Pancreas (tissue), 10 donors: ENCODE measurements at regions of chr4 and their contacts with region 1.

Region 1: DNA sequence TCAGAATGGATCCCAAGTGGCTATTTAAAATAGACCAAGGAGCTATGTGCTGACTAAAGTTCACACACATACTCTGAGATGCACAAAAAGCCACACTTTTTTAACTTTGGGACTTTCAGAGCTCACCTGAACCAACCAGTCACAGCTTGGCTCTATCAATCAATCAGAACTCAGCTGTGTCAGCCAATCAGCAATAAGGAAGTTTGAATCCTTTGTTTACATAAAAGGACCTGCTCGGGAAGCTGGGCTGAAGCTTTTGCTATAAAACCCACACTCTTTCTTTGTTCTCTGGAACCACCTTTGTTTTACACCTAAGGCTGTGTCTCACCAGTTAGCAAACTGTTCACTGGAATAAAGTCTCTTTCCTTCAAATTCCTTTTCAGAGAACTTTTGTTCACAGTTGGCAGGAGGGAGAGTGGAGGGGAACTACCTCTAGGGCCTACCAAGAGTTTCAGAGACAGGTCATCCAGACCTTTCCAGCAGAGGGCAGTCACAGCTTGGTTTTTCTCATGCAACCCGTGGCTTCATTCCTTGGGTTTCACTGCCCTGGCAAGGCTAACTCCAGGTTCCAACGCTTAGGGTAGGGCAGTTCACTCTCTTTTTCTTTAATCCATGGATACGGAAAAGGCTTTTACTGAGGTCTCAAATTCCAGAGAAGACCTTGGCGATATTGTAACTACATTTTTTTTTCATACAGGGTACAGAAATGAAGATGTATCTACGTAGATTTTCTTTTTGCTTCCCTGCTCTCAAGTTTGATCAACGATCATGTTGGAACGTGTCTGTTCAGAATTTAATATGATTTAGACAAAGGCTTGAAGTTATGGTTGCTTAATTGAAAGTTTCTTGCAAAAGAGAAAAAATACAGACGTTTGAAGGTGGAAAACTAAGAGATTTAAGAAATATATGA is 80.7 kb downstream of the GPRIN3 start:
- DNase-seq: peak; percentile 51 to 91 (median 79)
- ATAC-seq: peak; percentile 99 to 100 (median 100)
- H3K4me3 ChIP-seq: no peak overlapping the region
- H3K27ac ChIP-seq: peak overlapping the region in 1 of 4 donors; percentile 49
- H3K4me1 ChIP-seq: peaks cover 0 to 5% (median 0%) of the 10 kb centered on the region in 3 donors
- H3K27me3 ChIP-seq: no peaks in the 10 kb centered on the region
- CTCF ChIP-seq: peak; percentile 42 to 70 (median 64)

Region 2: GRCh38 chr4:88919056-88919455 is 307.9 kb before region 1 on chr4:
- intact Hi-C with region 1: no loop called
- DNase-seq: no peak
- ATAC-seq: no peak
- H3K4me3 ChIP-seq: no peak overlapping the region
- H3K27ac ChIP-seq: no peak overlapping the region
- H3K4me1 ChIP-seq: no peaks in the 10 kb centered on the region
- H3K27me3 ChIP-seq: no peaks in the 10 kb centered on the region
- CTCF ChIP-seq: no peak

Region 3: GRCh38 chr4:88949605-88950004 is 277.3 kb before region 1 on chr4:
- intact Hi-C with region 1: no loop called
- DNase-seq: no peak
- ATAC-seq: peak in 1 of 4 donors; percentile 17
- H3K4me3 ChIP-seq: no peak overlapping the region
- H3K27ac ChIP-seq: no peak overlapping the region
- H3K4me1 ChIP-seq: peaks cover 0 to 11% (median 10%) of the 10 kb centered on the region in 3 donors
- H3K27me3 ChIP-seq: no peaks in the 10 kb centered on the region
- CTCF ChIP-seq: no peak

Region 4: GRCh38 chr4:89164400-89164799 is 62.5 kb before region 1 on chr4:
- intact Hi-C with region 1: loop called in 1 of 3 experiments (anchors 5 kb)
- DNase-seq: no peak
- ATAC-seq: peak in 1 of 4 donors; percentile 37
- H3K4me3 ChIP-seq: no peak overlapping the region
- H3K27ac ChIP-seq: no peak overlapping the region
- H3K4me1 ChIP-seq: no peaks in the 10 kb centered on the region
- H3K27me3 ChIP-seq: no peaks in the 10 kb centered on the region
- CTCF ChIP-seq: no peak